ENCODE measurements at regions of chr13 and their contacts with region 1.

Region 1: GRCh38 chr13:98842864-98843481 is 90.5 kb upstream of the SLC15A1 start:
- DNase-seq: peak; percentile 75 to 89 (median 81)
- H3K4me3 ChIP-seq: no peak overlapping the region
- H3K27ac ChIP-seq: no peak overlapping the region
- H3K4me1 ChIP-seq: no peaks in the 10 kb centered on the region
- H3K27me3 ChIP-seq: no peaks in the 10 kb centered on the region
- CTCF ChIP-seq: peak; percentile 72 to 90 (median 83)
- POLR2A ChIP-seq: no peak

Region 2: GRCh38 chr13:98445340-98446233 is 397.4 kb before region 1 on chr13:
- intact Hi-C with region 1: loop called in 1 of 2 experiments (anchors 10 kb)
- DNase-seq: peak; percentile 43 to 84 (median 66)
- H3K4me3 ChIP-seq: no peak overlapping the region
- H3K27ac ChIP-seq: peak overlapping the region in 2 of 5 donors; percentile 20 to 36
- H3K4me1 ChIP-seq: peaks cover 0 to 4% of the 10 kb centered on the region in 2 donors
- H3K27me3 ChIP-seq: no peaks in the 10 kb centered on the region
- CTCF ChIP-seq: peak; percentile 91 to 97 (median 94)
- POLR2A ChIP-seq: no peak

Region 3: GRCh38 chr13:99033814-99034213 is 190.8 kb after region 1 on chr13:
- intact Hi-C with region 1: loop called in 1 of 2 experiments (anchors 10 kb)
- DNase-seq: no peak
- H3K4me3 ChIP-seq: no peak overlapping the region
- H3K27ac ChIP-seq: no peak overlapping the region
- H3K4me1 ChIP-seq: peaks cover 0 to 4% of the 10 kb centered on the region in 2 donors
- H3K27me3 ChIP-seq: no peaks in the 10 kb centered on the region
- CTCF ChIP-seq: peak; percentile 46 to 70 (median 68)
- POLR2A ChIP-seq: no peak

Measured in adrenal gland (tissue), 19 donors.